Activated naive CD4-positive, alpha-beta T cell treated with anti-CD3 and anti-CD28 coated beads, Interleukin-2, amount 10 ng/mL, durations not matched to agents 7 days and 5 days (primary cell): ENCODE measurements at regions of chr5 and their contacts with region 1.

Region 1: GRCh38 chr5:80255732-80256479 is at the start of gene SERINC5:
- DNase-seq: peak; percentile 90
- H3K4me3 Mint-ChIP-seq: peak within 1 kb of the TSS; percentile 92
- H3K27ac Mint-ChIP-seq: peak within 1 kb of the TSS; percentile 97
- H3K4me1 Mint-ChIP-seq: peaks cover 48% of the 10 kb centered on the region
- H3K27me3 Mint-ChIP-seq: peaks cover 3% of the 10 kb centered on the region

Region 2: DNA sequence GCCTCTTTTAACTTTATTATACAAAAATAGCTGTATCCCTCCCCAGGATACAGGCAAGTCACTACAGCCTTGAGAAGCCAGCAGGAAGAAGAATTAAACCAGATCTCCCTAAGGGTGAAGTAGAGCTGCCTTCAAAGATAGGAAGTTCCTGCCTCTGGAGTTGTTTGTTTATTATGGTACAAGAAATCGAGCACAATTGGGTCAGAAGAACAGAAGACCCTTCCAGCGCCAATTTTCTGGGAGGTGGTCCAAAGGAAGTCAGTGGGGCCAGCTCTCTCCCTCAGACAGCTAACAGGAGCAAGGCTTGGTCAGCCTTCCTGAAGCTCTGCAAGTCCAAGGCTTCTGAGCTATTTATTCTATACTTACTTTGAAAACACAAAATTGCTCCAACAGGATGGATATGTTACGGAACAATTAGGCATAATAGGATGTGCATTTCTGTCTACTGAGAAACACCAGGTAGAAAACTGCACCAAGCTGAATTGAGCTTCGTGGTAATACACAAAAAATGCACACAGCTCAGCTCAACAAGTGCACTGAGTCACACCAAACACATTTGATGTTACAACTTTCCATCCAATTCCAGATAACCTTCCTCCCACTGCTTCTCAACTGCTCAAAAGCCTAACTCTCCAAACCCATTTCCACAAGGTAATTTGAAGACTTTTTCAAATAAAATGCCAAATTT is 16.1 kb before region 1 on chr5:
- CTCF ChIA-PET with region 1: no interaction called
- DNase-seq: no peak
- H3K4me3 Mint-ChIP-seq: no peak overlapping the region
- H3K27ac Mint-ChIP-seq: peak overlapping the region; percentile 42
- H3K4me1 Mint-ChIP-seq: peaks cover 63% of the 10 kb centered on the region
- H3K27me3 Mint-ChIP-seq: no peaks in the 10 kb centered on the region

Region 3: DNA sequence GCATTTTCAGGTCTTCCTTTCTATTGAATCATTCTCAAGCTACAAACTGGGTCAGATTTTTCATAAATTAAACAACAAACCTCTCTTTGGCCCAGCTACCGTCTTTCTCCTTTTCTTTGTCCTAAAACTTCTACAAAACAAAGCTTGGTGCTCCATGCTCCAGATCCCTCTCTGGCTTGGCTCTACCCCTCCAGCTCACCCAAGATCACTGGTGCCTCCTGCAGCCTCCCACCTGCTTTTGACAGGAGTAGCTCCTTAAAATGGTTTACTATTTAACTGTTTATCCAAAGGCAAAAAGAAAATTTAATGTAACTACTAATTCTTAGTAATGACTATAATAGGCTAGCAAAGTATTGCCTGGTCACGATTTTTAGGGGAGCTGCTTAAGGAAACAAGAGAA is 10.7 kb after region 1 on chr5:
- CTCF ChIA-PET with region 1: interaction called, 11 read pairs
- DNase-seq: no peak
- H3K4me3 Mint-ChIP-seq: no peak overlapping the region
- H3K27ac Mint-ChIP-seq: no peak overlapping the region
- H3K4me1 Mint-ChIP-seq: peaks cover 59% of the 10 kb centered on the region
- H3K27me3 Mint-ChIP-seq: no peaks in the 10 kb centered on the region

Region 4: DNA sequence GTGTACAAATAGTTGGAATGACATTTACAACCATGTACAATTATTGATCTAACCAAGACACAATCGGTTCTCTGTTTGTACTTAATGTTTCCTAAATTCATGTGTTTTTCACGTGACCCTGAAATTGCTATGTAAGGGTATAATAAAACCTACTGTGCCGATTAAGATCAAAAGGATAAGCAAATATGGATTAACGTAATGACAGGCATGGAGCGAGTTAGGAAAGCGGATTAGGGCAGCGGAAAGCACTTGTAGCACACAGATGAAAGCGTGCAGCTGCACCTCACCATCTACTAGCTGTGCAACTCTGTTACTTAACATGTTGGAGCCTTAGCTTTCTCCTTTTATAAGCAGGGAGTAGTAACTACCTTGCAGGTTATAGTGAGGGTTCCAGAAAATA is 113.6 kb after region 1 on chr5:
- CTCF ChIA-PET with region 1: no interaction called
- DNase-seq: no peak
- H3K4me3 Mint-ChIP-seq: no peak overlapping the region
- H3K27ac Mint-ChIP-seq: no peak overlapping the region
- H3K4me1 Mint-ChIP-seq: no peaks in the 10 kb centered on the region
- H3K27me3 Mint-ChIP-seq: peaks cover 15% of the 10 kb centered on the region